ENCODE measurements at regions of chr6 and their contacts with region 1.

Region 1: GRCh38 chr6:34839666-34840352 is 47.9 kb downstream of the BLTP3A start:
- DNase-seq: no peak
- ATAC-seq: no peak
- H3K4me3 ChIP-seq: no peak overlapping the region
- H3K27ac ChIP-seq: no peak overlapping the region
- H3K4me1 ChIP-seq: no peaks in the 10 kb centered on the region
- H3K27me3 ChIP-seq: no peaks in the 10 kb centered on the region
- CTCF ChIP-seq: no peak
- EP300 ChIP-seq: no peak
- POLR2A ChIP-seq: no peak
- RAD21 ChIP-seq: no peak

Region 2: DNA sequence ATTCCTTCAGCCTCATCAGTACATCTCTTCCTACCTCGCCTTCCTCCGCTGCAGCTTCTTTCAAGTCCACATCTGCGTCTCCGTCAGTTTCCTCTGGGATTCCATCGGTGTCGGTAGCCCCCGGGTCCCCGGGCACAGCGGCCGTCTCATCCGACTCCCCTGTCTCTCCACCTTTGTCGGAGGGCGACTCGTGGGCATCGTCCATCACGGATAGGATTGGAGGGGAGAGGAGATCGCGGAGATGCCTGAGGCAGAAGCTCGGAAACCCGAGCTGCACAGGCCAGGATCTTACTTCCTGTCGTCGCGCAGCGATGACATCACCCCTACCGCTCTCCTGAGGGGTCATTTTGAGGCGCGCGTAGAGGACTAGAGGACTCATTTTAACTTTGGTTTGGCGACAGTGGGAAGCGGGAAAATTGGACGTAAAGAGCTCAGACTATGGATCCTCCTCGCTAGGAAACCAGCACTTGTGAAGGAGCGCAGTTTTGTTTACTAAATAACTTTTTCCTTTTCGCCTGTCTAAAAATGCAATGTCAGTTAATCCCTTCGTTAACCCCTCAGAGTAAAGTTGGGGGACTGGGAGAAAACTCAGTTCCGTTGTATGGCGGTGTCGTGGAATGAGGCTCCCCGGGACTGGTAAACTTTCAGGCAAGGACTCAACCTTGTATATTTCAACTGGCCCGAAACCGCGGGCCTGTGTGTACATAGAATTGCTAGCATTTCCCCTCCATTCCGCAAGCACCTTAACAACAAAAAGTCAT is 48.1 kb after region 1 on chr6 and contains the start of gene TAF11:
- CTCF ChIA-PET with region 1: no interaction called
- POLR2A ChIA-PET with region 1: no interaction called
- RAD21 ChIA-PET with region 1: no interaction called
- SMC1A ChIA-PET with region 1: no interaction called
- in situ Hi-C with region 1: no loop called
- intact Hi-C with region 1: loop called (anchors 1 kb)
- DNase-seq: peak; percentile 61
- ATAC-seq: peak; percentile 89
- H3K4me3 ChIP-seq: peak within 1 kb of the TSS; percentile 97
- H3K27ac ChIP-seq: peak within 1 kb of the TSS; percentile 88
- H3K4me1 ChIP-seq: peaks cover 5% of the 10 kb centered on the region
- H3K27me3 ChIP-seq: no peaks in the 10 kb centered on the region
- CTCF ChIP-seq: no peak
- EP300 ChIP-seq: 0 out of 4 replicates have a peak, but pooled peaks of 1 of the 2 experiments have one; percentile 12
- POLR2A ChIP-seq: peak; percentile 97
- RAD21 ChIP-seq: no peak
- polyA plus RNA-seq, gene TAF11: 24.6 to 31.7 TPM

Region 3: GRCh38 chr6:34922177-34922663 is 82.4 kb after region 1 on chr6:
- CTCF ChIA-PET with region 1: no interaction called
- POLR2A ChIA-PET with region 1: no interaction called
- RAD21 ChIA-PET with region 1: no interaction called
- SMC1A ChIA-PET with region 1: no interaction called
- in situ Hi-C with region 1: no loop called
- intact Hi-C with region 1: no loop called
- DNase-seq: no peak
- ATAC-seq: no peak
- H3K4me3 ChIP-seq: no peak overlapping the region
- H3K27ac ChIP-seq: no peak overlapping the region
- H3K4me1 ChIP-seq: no peaks in the 10 kb centered on the region
- H3K27me3 ChIP-seq: no peaks in the 10 kb centered on the region
- CTCF ChIP-seq: no peak
- EP300 ChIP-seq: no peak
- POLR2A ChIP-seq: no peak
- RAD21 ChIP-seq: no peak

Measured in GM12878 (cell line).